Heart left ventricle (tissue), 16 donors: ENCODE measurements at regions of chr11 and their contacts with region 1.

Region 1: DNA sequence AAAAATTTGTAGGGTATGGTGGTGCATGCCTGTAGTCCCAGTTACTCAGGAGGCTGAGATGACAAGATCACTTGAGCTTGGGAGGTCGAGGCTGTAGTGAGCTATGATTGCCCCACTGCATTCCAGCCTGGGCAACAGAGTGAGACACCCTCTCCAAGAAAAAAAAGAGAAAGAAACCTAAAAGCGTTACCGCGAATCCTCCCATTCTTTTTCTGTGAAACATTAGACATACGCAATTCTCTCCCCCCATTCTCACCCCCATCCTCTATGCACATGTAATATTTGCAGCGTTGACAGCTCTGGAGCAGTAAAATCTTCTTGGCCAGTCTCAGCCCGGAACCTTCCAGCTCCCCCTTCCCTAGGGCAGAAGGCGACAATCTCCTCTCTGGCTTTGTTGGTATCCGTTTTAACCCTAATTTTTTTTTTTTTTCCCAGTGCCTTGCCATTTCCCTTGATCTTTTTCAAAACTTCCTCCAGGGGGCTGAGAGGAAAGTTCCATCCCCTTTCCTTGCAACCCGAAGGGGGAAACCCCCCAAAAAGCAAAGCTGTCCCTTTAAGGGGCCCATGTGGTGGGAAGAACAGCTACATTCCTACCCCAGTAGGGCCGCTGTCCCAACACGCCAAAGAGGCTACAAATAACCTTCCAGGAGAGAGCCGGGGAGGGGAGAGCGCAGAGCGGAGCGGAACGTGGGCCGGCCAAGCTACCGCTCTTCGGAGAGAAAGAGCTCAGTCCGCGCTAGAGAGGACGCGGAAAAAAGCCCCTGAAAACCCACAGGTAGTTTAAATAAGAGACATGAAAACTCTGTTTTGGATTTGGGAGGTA is 1.9 kb downstream of the LRP4 start:
- DNase-seq: peak; percentile 61 to 75 (median 74)
- ATAC-seq: peak; percentile 66 to 84 (median 72)
- H3K4me3 ChIP-seq: peak overlapping the region; percentile 62 to 94 (median 70)
- H3K27ac ChIP-seq: peak overlapping the region; percentile 51 to 93 (median 88)
- H3K4me1 ChIP-seq: peaks cover 0 to 76% (median 47%) of the 10 kb centered on the region in 12 donors
- H3K27me3 ChIP-seq: peaks cover 0 to 50% (median 0%) of the 10 kb centered on the region in 9 donors
- CTCF ChIP-seq: peak in 4 of 12 donors; percentile 8 to 33 (median 15)
- POLR2A ChIP-seq: peak; percentile 23 to 50

Region 2: GRCh38 chr11:46445920-46446771 is 470.4 kb before region 1 on chr11:
- intact Hi-C with region 1: no loop called
- DNase-seq: no peak
- ATAC-seq: peak in 1 of 4 donors; percentile 20
- H3K4me3 ChIP-seq: no peak overlapping the region
- H3K27ac ChIP-seq: peak overlapping the region in 2 of 12 donors; percentile 10 to 21
- H3K4me1 ChIP-seq: peaks cover 0 to 47% (median 29%) of the 10 kb centered on the region in 12 donors
- H3K27me3 ChIP-seq: no peaks in the 10 kb centered on the region
- CTCF ChIP-seq: peak in 7 of 12 donors; percentile 13 to 42 (median 22)
- POLR2A ChIP-seq: no peak

Region 3: GRCh38 chr11:47004595-47005033 is 88.1 kb after region 1 on chr11:
- intact Hi-C with region 1: loop called in 1 of 10 experiments (anchors 10 kb)
- DNase-seq: peak; percentile 69 to 89 (median 78)
- ATAC-seq: peak; percentile 99
- H3K4me3 ChIP-seq: no peak overlapping the region
- H3K27ac ChIP-seq: peak overlapping the region in 11 of 12 donors; percentile 13 to 74 (median 64)
- H3K4me1 ChIP-seq: peaks cover 0 to 37% (median 25%) of the 10 kb centered on the region in 12 donors
- H3K27me3 ChIP-seq: no peaks in the 10 kb centered on the region
- CTCF ChIP-seq: no peak
- POLR2A ChIP-seq: no peak

Region 4: GRCh38 chr11:47143322-47143721 is 226.8 kb after region 1 on chr11:
- intact Hi-C with region 1: loop called in 1 of 10 experiments (anchors 5 kb)
- DNase-seq: peak in 4 of 5 donors; percentile 42 to 69 (median 56)
- ATAC-seq: peak; percentile 68 to 97 (median 90)
- H3K4me3 ChIP-seq: no peak overlapping the region
- H3K27ac ChIP-seq: peak overlapping the region in 3 of 12 donors; percentile 41 to 58 (median 49)
- H3K4me1 ChIP-seq: peaks cover 0 to 15% (median 6%) of the 10 kb centered on the region in 12 donors
- H3K27me3 ChIP-seq: no peaks in the 10 kb centered on the region
- CTCF ChIP-seq: no peak
- POLR2A ChIP-seq: no peak